ENCODE measurements at regions of chr4 and their contacts with region 1.

Region 1: DNA sequence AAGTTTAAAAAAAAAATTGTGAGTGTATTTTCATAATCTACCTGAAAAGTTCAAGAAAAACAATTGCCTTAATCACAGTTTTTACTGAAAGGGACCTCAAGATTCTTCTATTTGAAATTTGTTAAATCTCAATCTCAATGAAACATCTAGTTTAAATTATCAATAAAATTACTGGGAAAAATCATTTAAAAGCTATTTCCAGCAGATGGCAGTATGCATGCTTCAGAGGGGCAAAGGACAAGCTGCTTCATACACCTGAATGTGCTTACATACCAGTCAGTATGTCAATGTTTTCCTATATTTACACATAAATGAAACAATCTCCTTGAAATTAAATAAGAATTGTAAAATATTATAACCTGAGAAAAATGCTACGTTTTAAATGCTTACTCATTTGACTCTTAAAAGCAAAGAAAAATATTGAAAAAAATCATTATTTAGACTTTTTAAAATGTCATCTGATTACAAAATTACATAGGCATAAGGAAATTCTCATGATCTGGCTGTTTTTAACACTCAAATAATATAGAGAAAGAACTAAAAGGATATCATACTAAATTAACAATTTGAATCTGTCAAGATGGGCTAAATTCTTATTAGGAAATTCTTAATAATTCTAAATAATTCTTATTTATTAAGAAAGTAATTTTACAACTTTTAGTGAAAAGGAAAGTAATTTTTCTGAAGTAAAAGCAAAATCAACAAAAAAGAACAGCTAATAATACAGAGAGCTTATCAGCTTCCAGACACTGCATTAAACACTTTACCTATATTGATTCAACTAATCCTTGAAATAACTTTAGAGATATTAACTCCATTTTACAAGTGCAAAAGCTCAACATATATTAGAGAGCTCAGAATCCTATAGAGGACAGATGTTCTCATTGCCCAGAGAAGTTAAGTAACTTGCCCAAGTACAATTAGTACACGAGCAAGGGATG is 242.1 kb downstream of the ADAMTS3 start:
- DNase-seq: peak; percentile 49
- H3K4me3 ChIP-seq: no peak overlapping the region
- H3K27ac ChIP-seq: no peak overlapping the region
- H3K4me1 ChIP-seq: no peaks in the 10 kb centered on the region
- H3K27me3 ChIP-seq: peaks cover 0 to 3% of the 10 kb centered on the region in 2 experiments
- CTCF ChIP-seq: peak; percentile 39 to 47
- POLR2A ChIP-seq: no peak

Region 2: DNA sequence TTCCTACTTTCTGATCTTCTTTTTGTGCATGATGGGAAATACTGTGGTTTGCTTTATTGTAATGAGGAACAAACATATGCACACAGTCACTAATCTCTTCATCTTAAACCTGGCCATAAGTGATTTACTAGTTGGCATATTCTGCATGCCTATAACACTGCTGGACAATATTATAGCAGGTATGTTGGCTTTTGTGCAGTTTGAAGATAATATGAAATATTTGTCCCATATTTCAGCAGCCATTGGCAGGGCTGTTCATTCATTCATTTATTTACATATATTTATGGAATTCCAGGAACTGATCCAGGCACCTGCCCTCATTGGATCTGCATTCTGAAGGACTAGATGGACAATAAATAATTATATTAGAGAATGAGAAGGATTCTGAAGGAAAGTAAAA is 198.2 kb before region 1 on chr4:
- CTCF ChIA-PET with region 1: no interaction called
- POLR2A ChIA-PET with region 1: no interaction called
- dilution Hi-C with region 1: no loop called
- intact Hi-C with region 1: no loop called
- DNase-seq: no peak
- H3K4me3 ChIP-seq: no peak overlapping the region
- H3K27ac ChIP-seq: no peak overlapping the region
- H3K4me1 ChIP-seq: no peaks in the 10 kb centered on the region
- H3K27me3 ChIP-seq: no peaks in the 10 kb centered on the region
- CTCF ChIP-seq: no peak
- POLR2A ChIP-seq: no peak

Region 3: DNA sequence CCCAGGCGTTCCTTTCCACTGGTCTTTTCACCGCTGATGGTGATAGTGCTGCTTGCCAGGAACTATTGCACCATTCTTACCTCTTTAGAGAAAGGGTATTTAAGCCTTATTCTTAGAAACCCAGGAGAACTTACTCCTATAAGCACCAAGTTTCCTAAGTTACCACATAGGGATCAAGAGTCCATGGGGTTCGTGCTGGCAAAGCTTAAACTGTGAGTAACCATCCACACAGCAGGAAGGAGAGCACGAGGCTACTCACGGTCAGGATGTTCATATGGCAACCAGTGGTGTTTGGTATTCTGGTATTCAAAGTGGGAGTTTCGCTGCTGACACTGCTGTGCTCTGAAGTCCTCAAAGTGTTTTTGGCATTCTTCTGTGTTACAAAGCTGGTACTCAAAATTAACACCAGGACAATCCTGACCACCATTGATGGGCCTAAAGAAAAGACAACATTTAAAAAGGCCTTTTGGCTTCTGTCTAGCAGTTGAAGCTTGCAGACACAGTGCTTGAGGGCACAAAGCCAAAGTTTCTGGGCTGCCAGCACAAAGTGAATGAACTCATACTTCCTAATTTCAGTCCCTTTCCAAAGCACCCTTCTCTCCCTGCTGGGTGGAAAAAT is 14.8 kb before region 1 on chr4:
- CTCF ChIA-PET with region 1: interaction called, 23 read pairs
- POLR2A ChIA-PET with region 1: no interaction called
- dilution Hi-C with region 1: no loop called
- intact Hi-C with region 1: no loop called
- DNase-seq: peak; percentile 77
- H3K4me3 ChIP-seq: no peak overlapping the region
- H3K27ac ChIP-seq: no peak overlapping the region
- H3K4me1 ChIP-seq: peaks cover 13% of the 10 kb centered on the region
- H3K27me3 ChIP-seq: no peaks in the 10 kb centered on the region
- CTCF ChIP-seq: no peak
- POLR2A ChIP-seq: no peak

Region 4: GRCh38 chr4:72418458-72418857 is 91.5 kb after region 1 on chr4:
- CTCF ChIA-PET with region 1: interaction called, 17 read pairs
- POLR2A ChIA-PET with region 1: no interaction called
- dilution Hi-C with region 1: no loop called
- intact Hi-C with region 1: no loop called
- DNase-seq: peak; percentile 89
- H3K4me3 ChIP-seq: no peak overlapping the region
- H3K27ac ChIP-seq: peak overlapping the region; percentile 45
- H3K4me1 ChIP-seq: peaks cover 11% of the 10 kb centered on the region
- H3K27me3 ChIP-seq: no peaks in the 10 kb centered on the region
- CTCF ChIP-seq: no peak
- POLR2A ChIP-seq: no peak

Region 5: DNA sequence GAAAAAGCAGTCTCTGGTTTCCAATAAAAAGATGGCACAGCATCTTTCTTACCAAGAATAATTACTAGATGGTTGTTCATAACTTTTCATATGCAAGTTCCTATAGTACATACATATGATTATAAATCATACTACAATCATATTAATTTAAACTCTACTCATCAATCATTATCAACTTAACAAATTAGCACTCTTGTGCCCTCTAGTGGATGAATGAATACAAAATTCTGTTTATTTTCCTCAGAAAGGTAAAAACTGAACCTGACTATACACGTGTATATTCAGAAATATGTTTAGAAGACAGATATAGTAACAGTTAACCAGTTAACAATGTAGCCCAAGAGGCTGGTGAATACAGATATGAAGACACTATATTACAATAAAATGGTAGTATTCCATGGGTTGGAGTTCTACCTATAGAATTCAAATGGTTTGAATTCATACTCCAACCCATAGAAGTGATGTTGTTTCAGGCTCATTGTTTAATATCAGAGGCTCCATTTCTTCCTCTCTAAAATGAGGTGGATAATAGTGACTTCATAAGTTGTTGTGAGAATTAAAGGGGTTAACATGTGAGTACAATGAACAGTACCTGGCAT is 142.0 kb after region 1 on chr4:
- CTCF ChIA-PET with region 1: interaction called, 109 read pairs
- POLR2A ChIA-PET with region 1: no interaction called
- dilution Hi-C with region 1: no loop called
- intact Hi-C with region 1: loop called (anchors 1 kb)
- DNase-seq: peak; percentile 46
- H3K4me3 ChIP-seq: no peak overlapping the region
- H3K27ac ChIP-seq: no peak overlapping the region
- H3K4me1 ChIP-seq: peaks cover 3% of the 10 kb centered on the region
- H3K27me3 ChIP-seq: no peaks in the 10 kb centered on the region
- CTCF ChIP-seq: peak in 1 of 2 donors; percentile 23
- POLR2A ChIP-seq: no peak

Region 6: GRCh38 chr4:72567821-72568675 is 241.1 kb after region 1 on chr4:
- CTCF ChIA-PET with region 1: interaction called, 3 read pairs
- POLR2A ChIA-PET with region 1: no interaction called
- dilution Hi-C with region 1: no loop called
- intact Hi-C with region 1: loop called (anchors 10 kb)
- DNase-seq: peak; percentile 54
- H3K4me3 ChIP-seq: peak overlapping the region; percentile 74 to 91 (median 86)
- H3K27ac ChIP-seq: peak overlapping the region; percentile 16
- H3K4me1 ChIP-seq: peaks cover 24% of the 10 kb centered on the region
- H3K27me3 ChIP-seq: no peaks in the 10 kb centered on the region
- CTCF ChIP-seq: peak; percentile 19 to 23
- POLR2A ChIP-seq: no peak